ENCODE measurements at regions of chr2 and their contacts with region 1.

Region 1: DNA sequence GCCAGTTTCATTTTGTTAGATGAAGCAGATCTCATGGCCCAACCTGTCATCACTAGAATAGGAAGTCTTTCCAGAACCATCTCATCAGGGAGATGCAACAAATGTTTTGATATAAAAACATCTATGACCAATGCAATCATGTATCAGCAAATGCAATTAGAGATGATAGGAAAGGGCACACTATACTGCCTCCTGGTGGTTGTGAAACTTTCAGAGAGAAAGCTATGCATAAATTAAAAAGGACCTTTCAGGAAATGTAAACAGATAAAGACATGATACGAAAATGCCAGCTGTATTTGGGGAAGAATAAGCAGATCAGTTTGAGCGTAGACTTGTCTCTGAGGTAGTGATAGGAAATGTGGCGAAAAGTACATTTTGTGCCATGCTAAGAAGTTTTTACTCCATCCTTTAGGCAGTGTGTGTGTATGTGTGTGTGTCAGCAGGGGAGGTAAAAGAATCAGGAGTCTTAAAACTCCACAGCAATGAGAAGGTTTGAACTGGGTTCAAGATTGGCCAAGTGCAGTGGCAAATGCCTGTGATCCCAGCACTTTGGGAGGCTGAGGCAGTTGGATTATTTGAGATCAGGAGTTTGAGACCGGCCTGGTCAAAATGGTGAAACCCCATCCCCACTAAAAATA is 479.3 kb downstream of the CPS1 start:
- DNase-seq: peak; percentile 57
- H3K4me3 Mint-ChIP-seq: no peak overlapping the region
- H3K27ac Mint-ChIP-seq: no peak overlapping the region
- H3K4me1 Mint-ChIP-seq: peaks cover 2% of the 10 kb centered on the region
- H3K27me3 Mint-ChIP-seq: no peaks in the 10 kb centered on the region

Region 2: GRCh38 chr2:210617732-210618330 is 417.8 kb before region 1 on chr2:
- intact Hi-C with region 1: loop called (anchors 10 kb)
- DNase-seq: peak; percentile 62
- H3K4me3 Mint-ChIP-seq: no peak overlapping the region
- H3K27ac Mint-ChIP-seq: no peak overlapping the region
- H3K4me1 Mint-ChIP-seq: no peaks in the 10 kb centered on the region
- H3K27me3 Mint-ChIP-seq: no peaks in the 10 kb centered on the region

Measured in activated CD4-positive, alpha-beta T cell treated with anti-CD3 and anti-CD28 coated beads, Interleukin-2, amount 10 ng/mL, durations not matched to agents 24 days and 14 days (primary cell).